CD4-positive, alpha-beta T cell (primary cell): ENCODE measurements at regions of chr4 and their contacts with region 1.

Region 1: GRCh38 chr4:108570993-108571569 is 49.3 kb upstream of the RPL34 start:
- DNase-seq: no peak
- ATAC-seq: no peak
- H3K4me3 ChIP-seq: no peak overlapping the region
- H3K4me3 Mint-ChIP-seq: no peak overlapping the region
- H3K27ac ChIP-seq: no peak overlapping the region
- H3K27ac Mint-ChIP-seq: no peak overlapping the region
- H3K4me1 ChIP-seq: peaks cover 9% of the 10 kb centered on the region
- H3K4me1 Mint-ChIP-seq: peaks cover 33% of the 10 kb centered on the region
- H3K27me3 ChIP-seq: no peaks in the 10 kb centered on the region
- H3K27me3 Mint-ChIP-seq: no peaks in the 10 kb centered on the region
- CTCF ChIP-seq: no peak

Region 2: GRCh38 chr4:107757864-107758476 is 813.1 kb before region 1 on chr4:
- CTCF ChIA-PET with region 1: no interaction called
- POLR2A ChIA-PET with region 1: no interaction called
- intact Hi-C with region 1: loop called (anchors 5 kb)
- DNase-seq: peak in 3 of 14 experiments; percentile 25 to 42 (median 32)
- ATAC-seq: no peak
- H3K4me3 ChIP-seq: no peak overlapping the region
- H3K4me3 Mint-ChIP-seq: no peak overlapping the region
- H3K27ac ChIP-seq: no peak overlapping the region
- H3K27ac Mint-ChIP-seq: no peak overlapping the region
- H3K4me1 ChIP-seq: no peaks in the 10 kb centered on the region
- H3K4me1 Mint-ChIP-seq: no peaks in the 10 kb centered on the region
- H3K27me3 ChIP-seq: peaks cover 0 to 7% of the 10 kb centered on the region in 2 experiments
- H3K27me3 Mint-ChIP-seq: peaks cover 13% of the 10 kb centered on the region
- CTCF ChIP-seq: peak; percentile 80

Region 3: GRCh38 chr4:108060164-108060563 is 510.9 kb before region 1 on chr4:
- CTCF ChIA-PET with region 1: interaction called, 8 read pairs
- POLR2A ChIA-PET with region 1: interaction called, 3 read pairs
- intact Hi-C with region 1: loop called in 1 of 2 experiments (anchors 1 kb)
- DNase-seq: peak in 3 of 14 experiments; percentile 42 to 48 (median 48)
- ATAC-seq: no peak
- H3K4me3 ChIP-seq: no peak overlapping the region
- H3K4me3 Mint-ChIP-seq: no peak overlapping the region
- H3K27ac ChIP-seq: peak overlapping the region in 1 of 2 donors; percentile 38
- H3K27ac Mint-ChIP-seq: peak overlapping the region; percentile 93
- H3K4me1 ChIP-seq: peaks cover 52% of the 10 kb centered on the region
- H3K4me1 Mint-ChIP-seq: peaks cover 94% of the 10 kb centered on the region
- H3K27me3 ChIP-seq: no peaks in the 10 kb centered on the region
- H3K27me3 Mint-ChIP-seq: no peaks in the 10 kb centered on the region
- CTCF ChIP-seq: peak; percentile 12

Region 4: GRCh38 chr4:108135549-108136209 is 435.4 kb before region 1 on chr4:
- CTCF ChIA-PET with region 1: no interaction called
- POLR2A ChIA-PET with region 1: no interaction called
- intact Hi-C with region 1: no loop called
- DNase-seq: peak in 2 of 14 experiments; percentile 32
- ATAC-seq: peak; percentile 13
- H3K4me3 ChIP-seq: peak overlapping the region; percentile 20
- H3K4me3 Mint-ChIP-seq: peak overlapping the region; percentile 77
- H3K27ac ChIP-seq: peak overlapping the region; percentile 29 to 61
- H3K27ac Mint-ChIP-seq: peak overlapping the region; percentile 98
- H3K4me1 ChIP-seq: peaks cover 50% of the 10 kb centered on the region
- H3K4me1 Mint-ChIP-seq: peaks cover 92% of the 10 kb centered on the region
- H3K27me3 ChIP-seq: no peaks in the 10 kb centered on the region
- H3K27me3 Mint-ChIP-seq: no peaks in the 10 kb centered on the region
- CTCF ChIP-seq: no peak

Region 5: DNA sequence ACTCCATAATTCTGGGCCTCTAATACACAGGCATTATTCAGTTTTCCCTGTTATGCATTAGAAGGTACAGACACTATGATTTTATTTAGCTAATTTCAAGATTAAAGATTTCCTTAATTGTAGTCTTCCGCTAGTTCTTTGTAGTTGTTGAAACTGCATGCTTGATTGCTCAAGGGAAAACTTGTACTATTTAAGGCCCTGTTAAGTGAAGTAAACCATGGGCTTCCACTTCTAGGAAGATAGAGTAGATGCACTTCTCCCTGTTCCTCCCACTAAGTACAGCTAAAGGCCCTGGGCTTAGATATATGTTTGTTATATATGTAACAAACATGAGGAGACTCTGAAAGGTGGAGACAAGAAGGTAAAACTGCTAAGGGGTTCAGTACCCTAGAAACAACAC is 186.5 kb before region 1 on chr4:
- CTCF ChIA-PET with region 1: no interaction called
- POLR2A ChIA-PET with region 1: no interaction called
- intact Hi-C with region 1: loop called in 1 of 2 experiments (anchors 5 kb)
- DNase-seq: no peak
- ATAC-seq: no peak
- H3K4me3 ChIP-seq: no peak overlapping the region
- H3K4me3 Mint-ChIP-seq: no peak overlapping the region
- H3K27ac ChIP-seq: no peak overlapping the region
- H3K27ac Mint-ChIP-seq: no peak overlapping the region
- H3K4me1 ChIP-seq: no peaks in the 10 kb centered on the region
- H3K4me1 Mint-ChIP-seq: peaks cover 12% of the 10 kb centered on the region
- H3K27me3 ChIP-seq: no peaks in the 10 kb centered on the region
- H3K27me3 Mint-ChIP-seq: no peaks in the 10 kb centered on the region
- CTCF ChIP-seq: no peak

Region 6: DNA sequence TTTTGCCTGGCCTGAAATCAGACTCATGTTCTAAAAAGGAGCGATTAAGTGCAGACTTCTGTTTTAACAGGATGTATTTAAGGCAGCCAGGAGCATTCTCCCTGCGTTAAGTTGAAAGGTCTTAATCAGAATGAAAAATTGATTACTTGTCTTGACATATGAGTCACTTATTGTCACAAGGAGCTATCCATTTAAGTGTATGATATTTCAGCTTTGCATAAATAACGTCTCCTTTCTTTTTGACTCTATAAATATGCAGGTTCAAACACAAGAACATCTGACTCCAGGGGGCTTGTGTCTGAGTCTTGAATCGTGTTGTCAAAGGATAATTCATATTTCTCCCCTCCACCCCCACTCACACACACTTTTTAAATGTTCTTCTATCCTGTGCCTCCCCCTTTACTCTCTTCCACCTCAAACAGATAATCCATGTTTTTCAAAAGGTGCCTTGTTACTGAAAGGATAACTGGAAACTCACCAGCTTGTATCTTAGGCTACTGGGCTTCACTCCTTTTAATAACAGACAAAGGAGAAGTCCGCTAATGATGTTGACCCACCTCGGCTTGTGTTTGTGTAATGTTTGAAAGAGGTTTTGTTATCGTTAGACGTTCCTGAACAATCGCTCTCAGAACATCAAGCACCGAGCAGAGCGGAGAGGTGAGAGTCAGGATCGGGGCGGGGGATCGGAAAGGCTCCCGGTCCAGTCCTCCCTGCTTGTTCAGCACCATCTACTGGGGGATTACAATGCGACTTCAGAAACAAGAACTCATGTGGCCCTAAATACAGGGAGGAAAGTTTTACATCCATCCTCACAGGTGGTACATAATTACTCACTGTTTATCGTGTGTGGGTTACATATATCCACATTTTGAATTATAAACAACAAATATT is 58.2 kb before region 1 on chr4:
- CTCF ChIA-PET with region 1: interaction called, 3 read pairs
- POLR2A ChIA-PET with region 1: interaction called, 4 read pairs
- intact Hi-C with region 1: loop called in 1 of 2 experiments (anchors 5 kb)
- DNase-seq: peak; percentile 11 to 76 (median 42)
- ATAC-seq: peak; percentile 95
- H3K4me3 ChIP-seq: no peak overlapping the region
- H3K4me3 Mint-ChIP-seq: peak overlapping the region; percentile 78
- H3K27ac ChIP-seq: no peak overlapping the region
- H3K27ac Mint-ChIP-seq: no peak overlapping the region
- H3K4me1 ChIP-seq: peaks cover 3% of the 10 kb centered on the region
- H3K4me1 Mint-ChIP-seq: peaks cover 21% of the 10 kb centered on the region
- H3K27me3 ChIP-seq: no peaks in the 10 kb centered on the region
- H3K27me3 Mint-ChIP-seq: no peaks in the 10 kb centered on the region
- CTCF ChIP-seq: peak; percentile 29

Region 7: GRCh38 chr4:108644237-108644636 is 73.2 kb after region 1 on chr4:
- CTCF ChIA-PET with region 1: no interaction called
- POLR2A ChIA-PET with region 1: no interaction called
- intact Hi-C with region 1: no loop called
- DNase-seq: no peak
- ATAC-seq: no peak
- H3K4me3 ChIP-seq: no peak overlapping the region
- H3K4me3 Mint-ChIP-seq: no peak overlapping the region
- H3K27ac ChIP-seq: no peak overlapping the region
- H3K27ac Mint-ChIP-seq: no peak overlapping the region
- H3K4me1 ChIP-seq: peaks cover 2% of the 10 kb centered on the region
- H3K4me1 Mint-ChIP-seq: peaks cover 13% of the 10 kb centered on the region
- H3K27me3 ChIP-seq: no peaks in the 10 kb centered on the region
- H3K27me3 Mint-ChIP-seq: no peaks in the 10 kb centered on the region
- CTCF ChIP-seq: no peak